ENCODE measurements at regions of chr15 and their contacts with region 1.

Region 1: DNA sequence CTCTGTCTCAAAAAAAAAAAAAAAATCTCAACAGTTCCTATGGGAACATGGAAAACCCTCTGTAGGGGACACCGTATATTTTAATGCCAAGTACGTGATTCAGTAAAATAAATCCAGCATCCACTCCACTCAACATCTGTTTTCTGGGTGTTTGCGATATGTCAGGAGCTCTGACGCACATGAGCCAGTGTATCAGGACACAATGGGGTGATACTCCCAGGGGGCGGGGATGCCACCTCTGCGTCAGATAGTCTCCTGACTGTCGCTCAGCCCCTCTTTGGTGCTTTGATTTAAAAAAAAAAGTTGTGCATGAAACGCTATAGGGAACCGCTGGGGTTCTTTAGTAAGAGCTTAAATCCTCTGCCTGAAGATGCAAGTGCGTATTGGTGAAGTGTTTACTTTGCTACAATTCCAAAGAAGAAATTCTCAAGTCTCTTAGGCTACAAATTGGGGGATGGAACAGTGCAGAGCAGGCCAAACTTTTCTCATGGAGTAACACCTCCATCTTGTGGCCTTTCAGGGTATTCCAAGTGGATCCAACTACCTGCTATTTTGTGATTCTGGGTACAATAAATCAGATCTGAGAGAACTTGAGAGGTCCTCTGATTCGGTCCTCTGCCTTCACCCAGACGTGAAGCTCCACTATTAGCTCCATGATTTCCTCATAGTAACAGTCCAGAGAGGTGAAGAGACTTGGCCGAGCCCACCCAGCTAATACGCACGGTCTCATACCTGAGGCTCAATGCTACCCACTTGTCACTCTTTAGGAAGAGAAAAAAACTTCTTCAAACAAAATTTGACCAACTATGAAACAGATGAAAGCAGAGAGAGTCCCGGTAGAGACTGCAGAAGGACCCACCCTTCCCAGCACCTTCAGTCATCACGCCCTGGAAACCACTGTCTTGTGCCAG is 9.3 kb upstream of the NR2E3 start:
- DNase-seq: peak; percentile 35
- ATAC-seq: no peak
- H3K4me3 Mint-ChIP-seq: no peak overlapping the region
- H3K27ac Mint-ChIP-seq: no peak overlapping the region
- H3K4me1 Mint-ChIP-seq: no peaks in the 10 kb centered on the region
- H3K27me3 Mint-ChIP-seq: peaks cover 7% of the 10 kb centered on the region

Region 2: DNA sequence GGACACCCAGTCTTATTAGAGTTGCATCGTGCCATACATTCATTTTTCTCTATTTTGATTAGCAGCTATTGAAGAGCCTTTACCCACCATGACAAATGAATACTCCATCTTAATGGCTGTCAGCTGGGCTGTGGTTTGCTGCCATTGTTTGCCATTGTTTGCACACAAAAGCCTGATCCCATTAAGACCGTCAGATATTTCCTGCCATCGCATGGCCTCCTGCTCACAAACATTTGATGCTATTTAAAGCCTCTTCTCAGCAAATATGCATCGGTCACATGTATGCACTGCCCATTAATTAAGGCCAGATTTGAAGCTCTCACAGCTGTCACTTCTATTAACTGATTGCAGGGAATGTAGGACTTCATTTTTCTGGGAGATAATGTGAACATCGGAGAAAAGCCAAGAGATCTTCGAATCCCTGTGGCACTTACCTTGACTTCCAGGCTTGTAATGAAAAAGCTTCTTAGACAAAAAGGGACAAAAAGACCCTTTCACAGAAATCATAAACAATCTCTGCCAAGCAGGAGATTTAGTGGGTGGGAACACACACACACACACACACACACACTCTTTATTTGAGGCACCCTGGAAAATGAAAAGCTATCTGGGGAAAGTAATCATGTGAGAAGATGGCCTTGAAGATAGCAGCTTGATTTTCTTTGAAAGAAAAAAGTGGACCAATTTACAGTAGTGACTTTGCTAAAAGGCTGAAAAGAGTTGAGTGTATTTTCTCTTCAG is 166.1 kb before region 1 on chr15:
- CTCF ChIA-PET with region 1: no interaction called
- POLR2A ChIA-PET with region 1: no interaction called
- DNase-seq: no peak
- ATAC-seq: no peak
- H3K4me3 Mint-ChIP-seq: no peak overlapping the region
- H3K27ac Mint-ChIP-seq: no peak overlapping the region
- H3K4me1 Mint-ChIP-seq: no peaks in the 10 kb centered on the region
- H3K27me3 Mint-ChIP-seq: peaks cover 2% of the 10 kb centered on the region

Region 3: DNA sequence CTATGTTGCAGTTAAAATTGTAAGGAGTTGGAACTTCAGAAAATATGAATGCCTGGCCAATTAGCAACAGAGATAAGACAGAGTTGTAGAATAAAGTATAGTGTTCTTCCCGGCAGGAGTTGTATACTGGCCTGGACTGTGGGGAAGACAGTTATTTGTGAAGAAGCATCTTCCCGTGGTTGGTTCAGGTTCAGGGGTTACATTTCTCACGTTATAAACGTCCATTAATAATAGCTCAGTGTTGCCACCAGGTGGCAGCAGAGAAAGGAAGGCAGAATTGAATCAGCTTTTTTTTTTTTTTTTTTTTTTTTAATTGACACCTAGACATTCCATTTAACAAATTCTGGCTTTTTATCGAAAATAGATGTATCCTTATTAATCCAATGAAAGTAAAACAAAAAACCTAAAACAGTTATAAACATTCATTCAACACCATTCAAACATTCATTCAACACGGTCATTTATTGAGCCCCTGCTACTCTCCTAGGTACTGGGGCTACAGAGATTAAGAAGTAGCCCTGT is 57.2 kb before region 1 on chr15:
- CTCF ChIA-PET with region 1: interaction called, 10 read pairs
- POLR2A ChIA-PET with region 1: no interaction called
- DNase-seq: peak; percentile 71
- ATAC-seq: no peak
- H3K4me3 Mint-ChIP-seq: no peak overlapping the region
- H3K27ac Mint-ChIP-seq: no peak overlapping the region
- H3K4me1 Mint-ChIP-seq: no peaks in the 10 kb centered on the region
- H3K27me3 Mint-ChIP-seq: peaks cover 4% of the 10 kb centered on the region

Region 4: DNA sequence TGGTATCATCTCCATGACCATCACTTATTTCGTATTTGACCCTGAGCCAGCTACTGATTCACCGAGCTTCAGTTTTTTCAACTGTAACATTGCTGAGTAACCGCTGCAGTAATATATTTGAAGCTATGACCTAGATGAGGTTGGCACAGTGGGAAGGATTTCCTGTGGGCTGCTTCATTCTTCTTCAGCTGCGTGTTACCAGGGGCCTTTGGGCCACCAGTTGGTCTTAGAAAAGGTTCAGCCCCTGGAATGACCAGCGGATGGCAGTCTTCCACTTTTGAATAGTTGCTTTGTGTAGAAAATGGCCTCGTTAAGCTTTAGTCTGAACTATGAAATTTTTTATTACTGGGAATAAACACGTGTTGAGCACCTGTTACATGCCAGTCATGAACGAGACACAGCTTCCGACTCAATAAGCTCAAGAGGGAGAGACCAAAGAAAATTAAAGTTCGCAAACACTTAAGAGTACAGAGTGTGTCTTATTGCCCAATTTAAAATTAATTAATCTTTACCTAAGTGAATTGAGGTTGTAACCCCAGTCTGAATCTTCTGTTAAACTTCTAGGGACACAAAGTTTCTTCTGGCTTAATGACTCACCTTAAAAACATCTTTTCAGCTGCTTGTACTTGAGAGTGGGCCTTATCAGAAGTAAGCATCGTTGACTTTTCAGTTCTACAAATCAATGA is 48.3 kb before region 1 on chr15:
- CTCF ChIA-PET with region 1: interaction called, 21 read pairs
- POLR2A ChIA-PET with region 1: no interaction called
- DNase-seq: peak; percentile 24
- ATAC-seq: no peak
- H3K4me3 Mint-ChIP-seq: no peak overlapping the region
- H3K27ac Mint-ChIP-seq: no peak overlapping the region
- H3K4me1 Mint-ChIP-seq: peaks cover 6% of the 10 kb centered on the region
- H3K27me3 Mint-ChIP-seq: peaks cover 17% of the 10 kb centered on the region

Region 5: GRCh38 chr15:71812966-71813722 is 12.1 kb after region 1 on chr15:
- CTCF ChIA-PET with region 1: no interaction called
- POLR2A ChIA-PET with region 1: no interaction called
- DNase-seq: no peak
- ATAC-seq: no peak
- H3K4me3 Mint-ChIP-seq: no peak overlapping the region
- H3K27ac Mint-ChIP-seq: no peak overlapping the region
- H3K4me1 Mint-ChIP-seq: no peaks in the 10 kb centered on the region
- H3K27me3 Mint-ChIP-seq: no peaks in the 10 kb centered on the region

Region 6: GRCh38 chr15:71962537-71962936 is 161.4 kb after region 1 on chr15:
- CTCF ChIA-PET with region 1: no interaction called
- POLR2A ChIA-PET with region 1: no interaction called
- DNase-seq: no peak
- ATAC-seq: no peak
- H3K4me3 Mint-ChIP-seq: no peak overlapping the region
- H3K27ac Mint-ChIP-seq: no peak overlapping the region
- H3K4me1 Mint-ChIP-seq: no peaks in the 10 kb centered on the region
- H3K27me3 Mint-ChIP-seq: no peaks in the 10 kb centered on the region

Measured in activated CD8-positive, alpha-beta T cell treated with anti-CD3 and anti-CD28 coated beads, Interleukin-2, amount 10 ng/mL, durations not matched to agents 7 days and 5 days (primary cell).